Common myeloid progenitor, CD34-positive (primary cell): ENCODE measurements at regions of chr12 and their contacts with region 1.

Region 1: DNA sequence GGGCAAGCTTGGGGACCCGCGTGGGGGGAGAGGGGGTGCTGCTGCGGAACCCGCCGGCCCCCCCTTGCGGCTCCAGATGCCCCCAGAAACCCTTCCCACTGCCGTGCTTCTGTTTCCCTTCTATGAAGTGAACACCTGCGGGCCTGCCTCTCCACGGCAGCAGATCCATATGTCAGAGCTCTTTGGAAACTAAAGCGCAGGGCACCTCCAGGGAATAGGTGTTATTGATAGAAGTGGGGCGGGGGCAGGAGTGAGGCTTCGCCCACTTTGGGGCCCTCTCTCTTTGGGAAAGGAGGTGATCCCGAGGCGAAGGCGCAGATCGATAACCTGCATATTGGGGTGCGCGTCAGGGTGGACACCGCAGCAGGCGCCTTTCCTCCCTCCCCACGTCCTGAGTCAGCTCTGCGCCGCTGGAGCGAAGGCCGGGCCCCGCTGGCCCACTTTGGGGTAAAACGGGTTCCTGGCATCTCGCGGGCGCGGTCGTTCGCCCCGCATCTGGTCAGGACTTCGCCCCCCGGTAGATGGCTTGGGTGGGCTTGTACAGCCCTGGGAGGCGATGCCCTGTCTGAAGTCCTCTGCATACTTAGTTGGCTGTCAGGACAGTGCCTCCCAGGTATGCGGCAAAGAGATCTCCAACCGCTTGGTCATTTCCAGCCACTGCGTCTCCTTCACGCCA is 524 bp downstream of the KMT5A start:
- DNase-seq: peak in 1 of 3 donors; percentile 28
- H3K4me3 ChIP-seq: peak overlapping the region; percentile 57 to 92 (median 88)
- H3K27ac ChIP-seq: peak overlapping the region in 1 of 2 experiments; percentile 83
- H3K4me1 ChIP-seq: peaks cover 6 to 36% (median 25%) of the 10 kb centered on the region in 4 experiments
- H3K27me3 ChIP-seq: no peaks in the 10 kb centered on the region

Region 2: DNA sequence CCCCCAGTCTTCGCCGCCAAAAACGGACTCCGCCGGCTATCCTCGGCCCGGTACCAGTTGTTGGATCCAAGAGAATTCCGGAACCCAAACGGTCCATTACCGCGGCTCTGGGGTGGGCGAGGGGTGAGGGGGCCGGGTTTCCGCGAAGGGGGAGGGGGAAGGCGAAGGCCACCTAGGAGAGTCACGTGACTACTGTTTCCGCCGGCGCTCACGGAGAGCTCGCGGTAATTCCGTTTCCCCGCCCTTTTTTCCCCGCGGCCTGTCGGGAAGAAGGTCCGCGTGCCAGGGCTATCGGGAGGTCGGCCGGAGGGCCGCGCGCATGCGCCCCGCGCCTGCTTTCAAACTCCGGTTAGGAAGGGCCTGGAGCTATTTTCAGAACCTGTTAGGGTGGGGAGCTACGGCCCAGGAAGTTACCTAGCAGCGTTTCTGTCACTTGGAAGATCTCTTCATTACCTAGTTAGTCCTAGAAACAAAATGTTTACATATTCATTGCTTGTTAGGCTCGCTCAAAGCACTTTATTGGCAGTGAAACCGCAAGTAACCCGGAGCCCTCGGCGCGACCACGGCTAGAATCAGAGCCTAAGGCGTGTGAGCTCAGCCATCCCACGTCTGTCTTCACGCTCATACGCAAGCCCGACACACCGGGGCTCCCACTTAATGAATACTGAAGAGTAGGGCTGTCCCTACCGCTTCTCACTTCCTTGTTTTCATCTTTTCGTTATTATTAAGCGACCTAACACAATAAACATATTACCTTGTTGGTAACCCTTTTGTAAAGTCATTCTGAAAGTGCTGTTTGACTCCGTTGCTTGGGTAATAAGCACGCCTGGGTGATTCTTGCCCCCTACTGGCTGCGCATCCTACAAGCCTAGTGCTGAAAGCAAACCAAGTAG is 19.2 kb before region 1 on chr12:
- CTCF ChIA-PET with region 1: interaction called, 20 read pairs
- POLR2A ChIA-PET with region 1: interaction called, 7 read pairs
- DNase-seq: peak; percentile 99
- H3K4me3 ChIP-seq: peak overlapping the region; percentile 41 to 98 (median 87)
- H3K27ac ChIP-seq: peak overlapping the region; percentile 97 to 99
- H3K4me1 ChIP-seq: peaks cover 4 to 25% (median 19%) of the 10 kb centered on the region in 4 experiments
- H3K27me3 ChIP-seq: no peaks in the 10 kb centered on the region

Region 3: GRCh38 chr12:123404581-123404980 is 20.1 kb after region 1 on chr12:
- CTCF ChIA-PET with region 1: no interaction called
- POLR2A ChIA-PET with region 1: no interaction called
- DNase-seq: no peak
- H3K4me3 ChIP-seq: no peak overlapping the region
- H3K27ac ChIP-seq: no peak overlapping the region
- H3K4me1 ChIP-seq: no peaks in the 10 kb centered on the region
- H3K27me3 ChIP-seq: no peaks in the 10 kb centered on the region

Region 4: GRCh38 chr12:123512838-123513665 is 128.6 kb after region 1 on chr12:
- CTCF ChIA-PET with region 1: no interaction called
- POLR2A ChIA-PET with region 1: no interaction called
- DNase-seq: peak in 1 of 3 donors; percentile 9
- H3K4me3 ChIP-seq: no peak overlapping the region
- H3K27ac ChIP-seq: no peak overlapping the region
- H3K4me1 ChIP-seq: peaks cover 0 to 6% (median 4%) of the 10 kb centered on the region in 4 experiments
- H3K27me3 ChIP-seq: no peaks in the 10 kb centered on the region